SK-N-SH (cell line): ENCODE measurements at regions of chr7 and their contacts with region 1.

Region 1: DNA sequence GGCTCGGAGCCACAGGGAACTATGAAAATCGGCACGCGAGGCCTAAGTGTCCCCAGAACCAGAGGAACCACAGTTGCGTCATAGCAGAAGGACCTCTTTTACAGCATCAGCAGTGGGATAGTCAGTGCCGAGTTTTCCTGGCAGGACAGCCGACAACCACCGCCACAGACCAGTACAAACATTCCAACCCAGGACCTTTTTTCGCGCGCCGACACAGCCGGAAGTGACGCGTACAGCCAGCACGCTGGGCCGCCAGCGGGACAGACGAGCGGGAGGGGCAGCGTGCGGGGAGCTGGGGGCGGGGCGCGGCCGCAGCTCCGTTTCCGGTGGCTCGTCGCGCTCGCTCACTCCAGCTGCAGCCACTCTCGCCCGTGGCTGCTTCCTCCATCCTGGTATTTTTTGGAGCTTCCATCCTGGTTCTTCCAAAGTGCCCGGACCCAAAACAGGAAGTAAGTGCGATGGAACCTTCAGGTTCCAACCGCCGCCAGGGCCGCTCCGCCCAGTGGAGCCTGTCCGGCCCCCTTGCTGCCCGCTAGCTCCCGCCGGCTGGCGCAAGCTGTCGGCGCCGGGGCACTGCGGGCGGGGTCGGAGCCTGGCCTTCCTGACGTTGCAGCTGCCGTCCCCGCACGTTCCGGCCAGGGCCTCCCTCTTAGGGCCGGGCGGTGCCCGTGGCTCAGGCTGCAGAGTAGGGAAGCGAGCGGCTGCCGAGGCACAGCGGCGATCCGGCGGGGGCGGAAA is at the start of gene DMTF1:
- DNase-seq: peak; percentile 98
- H3K4me3 ChIP-seq: peak within 1 kb of the TSS; percentile 73 to 92
- H3K27ac ChIP-seq: peak within 1 kb of the TSS; percentile 96 to 99
- H3K4me1 ChIP-seq: peaks cover 19 to 38% of the 10 kb centered on the region in 2 experiments; a peak in 3 of 4 replicates
- H3K27me3 ChIP-seq: no peaks in the 10 kb centered on the region
- CTCF ChIP-seq: no peak
- EP300 ChIP-seq: peak; percentile 31 to 55; a peak in 3 of 4 replicates
- RAD21 ChIP-seq: no peak
- polyA plus RNA-seq, gene DMTF1: 108 and 177 TPM in 2 replicates

Region 2: GRCh38 chr7:86914551-86914950 is 237.7 kb before region 1 on chr7:
- CTCF ChIA-PET with region 1: interaction called, 295 read pairs
- POLR2A ChIA-PET with region 1: no interaction called
- DNase-seq: no peak
- H3K4me3 ChIP-seq: no peak overlapping the region; a peak in 1 of 4 replicates
- H3K27ac ChIP-seq: peak overlapping the region in 1 of 2 experiments; percentile 85; a peak in 3 of 4 replicates
- H3K4me1 ChIP-seq: peaks cover 11 to 17% of the 10 kb centered on the region in 2 experiments; a peak in 2 of 4 replicates
- H3K27me3 ChIP-seq: no peaks in the 10 kb centered on the region
- CTCF ChIP-seq: peak; percentile 94
- EP300 ChIP-seq: no peak
- RAD21 ChIP-seq: peak; percentile 52

Region 3: DNA sequence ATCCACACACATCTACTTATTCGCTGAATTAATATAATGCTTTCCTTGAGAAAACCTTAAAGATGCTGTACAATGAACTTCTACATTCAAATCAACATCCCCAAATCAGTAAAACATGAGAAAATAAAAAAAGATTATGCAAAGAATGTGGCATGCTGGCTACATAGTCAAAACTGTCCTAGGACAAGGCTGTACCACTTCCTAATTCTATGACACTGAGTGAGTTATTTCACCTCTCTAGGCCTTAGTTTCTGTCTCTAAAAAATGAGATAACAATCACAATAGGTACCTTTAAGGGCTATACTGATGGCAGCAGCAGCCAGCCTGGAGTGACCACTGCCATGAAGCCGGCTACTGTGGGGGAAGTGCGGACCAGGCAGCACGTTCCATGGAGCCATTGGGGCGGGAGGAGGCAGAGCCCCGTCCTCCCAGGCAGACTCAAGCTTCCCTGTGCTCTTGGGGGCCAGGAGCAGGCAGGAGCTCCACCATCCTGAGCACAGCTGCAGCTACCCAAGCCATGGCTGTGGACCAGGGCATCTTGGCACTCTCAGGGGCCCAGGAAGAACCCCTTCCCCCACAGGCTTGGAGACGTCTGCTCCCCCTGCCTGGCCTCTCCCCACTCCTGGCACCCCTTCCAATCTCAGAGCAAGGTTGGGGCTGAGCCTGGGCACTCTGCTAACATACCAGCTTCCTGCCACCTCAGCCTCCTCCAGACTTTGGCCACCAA is 203.1 kb before region 1 on chr7:
- CTCF ChIA-PET with region 1: interaction called, 133 read pairs
- POLR2A ChIA-PET with region 1: interaction called, 3 read pairs
- DNase-seq: no peak
- H3K4me3 ChIP-seq: no peak overlapping the region
- H3K27ac ChIP-seq: no peak overlapping the region
- H3K4me1 ChIP-seq: peaks cover 0 to 12% of the 10 kb centered on the region in 2 experiments; a peak in 2 of 4 replicates
- H3K27me3 ChIP-seq: no peaks in the 10 kb centered on the region
- CTCF ChIP-seq: no peak
- EP300 ChIP-seq: no peak
- RAD21 ChIP-seq: no peak

Region 4: GRCh38 chr7:87059525-87060287 is 92.6 kb before region 1 on chr7 and contains the start of gene ELAPOR2:
- CTCF ChIA-PET with region 1: interaction called, 45 read pairs
- POLR2A ChIA-PET with region 1: interaction called, 18 read pairs
- DNase-seq: peak; percentile 98
- H3K4me3 ChIP-seq: peak within 1 kb of the TSS; percentile 81 to 90
- H3K27ac ChIP-seq: peak within 1 kb of the TSS in 1 of 2 experiments; percentile 87; a peak in 2 of 4 replicates
- H3K4me1 ChIP-seq: peaks cover 0 to 14% of the 10 kb centered on the region in 2 experiments; a peak in 2 of 4 replicates
- H3K27me3 ChIP-seq: no peaks in the 10 kb centered on the region
- CTCF ChIP-seq: peak; percentile 55
- EP300 ChIP-seq: peak in 1 of 2 experiments; percentile 29; a peak in 1 of 4 replicates
- RAD21 ChIP-seq: peak; percentile 64
- polyA plus RNA-seq, gene ELAPOR2: 8.8 and 15.9 TPM in 2 replicates

Region 5: GRCh38 chr7:87173471-87173870 is 21.2 kb after region 1 on chr7:
- CTCF ChIA-PET with region 1: interaction called, 11 read pairs
- POLR2A ChIA-PET with region 1: interaction called, 5 read pairs
- DNase-seq: no peak
- H3K4me3 ChIP-seq: no peak overlapping the region
- H3K27ac ChIP-seq: no peak overlapping the region
- H3K4me1 ChIP-seq: no peaks in the 10 kb centered on the region; a peak in 2 of 4 replicates
- H3K27me3 ChIP-seq: no peaks in the 10 kb centered on the region
- CTCF ChIP-seq: no peak
- EP300 ChIP-seq: no peak
- RAD21 ChIP-seq: no peak

Region 6: DNA sequence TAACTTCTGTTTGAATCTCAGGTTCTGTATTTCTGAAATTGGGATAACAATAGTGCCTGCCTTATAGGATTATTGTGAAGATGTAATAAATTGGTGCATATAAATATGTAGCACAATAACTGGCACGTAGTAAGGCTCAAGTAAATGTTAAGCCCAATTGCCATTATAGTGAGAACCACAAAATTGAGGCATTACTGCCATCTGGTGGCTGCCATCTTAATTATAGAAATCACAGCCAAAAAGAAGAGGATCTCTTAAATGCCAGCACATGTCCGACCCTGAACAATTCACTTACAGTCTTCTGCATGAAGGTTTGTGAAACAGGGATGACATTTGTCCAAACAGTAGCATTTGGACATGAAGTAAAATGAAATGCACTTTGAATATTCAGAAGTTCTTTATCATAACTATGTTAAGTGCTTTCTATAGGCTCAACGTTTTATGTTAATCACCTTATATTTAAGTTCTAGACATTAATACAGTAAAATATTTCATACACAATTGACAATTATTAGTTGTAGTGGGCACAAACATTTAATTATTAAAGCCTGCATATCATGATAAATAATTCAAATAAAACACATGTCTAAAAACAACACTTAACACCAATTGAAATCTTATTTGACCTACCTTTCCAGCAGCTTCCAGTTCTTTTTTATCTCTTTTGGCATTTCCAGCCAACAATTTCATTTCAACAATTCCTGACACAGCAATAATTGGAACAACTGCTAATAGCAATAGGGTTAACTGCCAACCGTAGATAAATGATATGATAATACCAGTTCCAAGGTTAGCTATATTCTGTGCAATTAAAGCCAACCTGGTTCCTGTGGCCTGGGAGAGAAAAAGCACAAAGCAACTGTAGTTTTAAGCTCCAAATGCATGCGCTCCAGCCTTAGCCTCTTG is 264.7 kb after region 1 on chr7:
- CTCF ChIA-PET with region 1: interaction called, 11 read pairs
- POLR2A ChIA-PET with region 1: no interaction called
- DNase-seq: peak; percentile 48
- H3K4me3 ChIP-seq: no peak overlapping the region
- H3K27ac ChIP-seq: no peak overlapping the region
- H3K4me1 ChIP-seq: peaks cover 8 to 9% of the 10 kb centered on the region in 2 experiments; a peak in 3 of 4 replicates
- H3K27me3 ChIP-seq: no peaks in the 10 kb centered on the region
- CTCF ChIP-seq: peak; percentile 93
- EP300 ChIP-seq: no peak
- RAD21 ChIP-seq: peak; percentile 98